ENCODE measurements at regions of chr12 and their contacts with region 1.

Region 1: GRCh38 chr12:89040146-89040964 is 311.9 kb downstream of the DUSP6 start:
- DNase-seq: peak; percentile 94
- H3K4me3 Mint-ChIP-seq: no peak overlapping the region
- H3K27ac Mint-ChIP-seq: peak overlapping the region; percentile 82
- H3K4me1 Mint-ChIP-seq: peaks cover 46% of the 10 kb centered on the region
- H3K27me3 Mint-ChIP-seq: no peaks in the 10 kb centered on the region

Region 2: GRCh38 chr12:88299567-88300101 is 740.7 kb before region 1 on chr12:
- CTCF ChIA-PET with region 1: no interaction called
- intact Hi-C with region 1: loop called (anchors 1 kb)
- DNase-seq: peak; percentile 50
- H3K4me3 Mint-ChIP-seq: no peak overlapping the region
- H3K27ac Mint-ChIP-seq: peak overlapping the region; percentile 9
- H3K4me1 Mint-ChIP-seq: peaks cover 17% of the 10 kb centered on the region
- H3K27me3 Mint-ChIP-seq: peaks cover 5% of the 10 kb centered on the region

Region 3: DNA sequence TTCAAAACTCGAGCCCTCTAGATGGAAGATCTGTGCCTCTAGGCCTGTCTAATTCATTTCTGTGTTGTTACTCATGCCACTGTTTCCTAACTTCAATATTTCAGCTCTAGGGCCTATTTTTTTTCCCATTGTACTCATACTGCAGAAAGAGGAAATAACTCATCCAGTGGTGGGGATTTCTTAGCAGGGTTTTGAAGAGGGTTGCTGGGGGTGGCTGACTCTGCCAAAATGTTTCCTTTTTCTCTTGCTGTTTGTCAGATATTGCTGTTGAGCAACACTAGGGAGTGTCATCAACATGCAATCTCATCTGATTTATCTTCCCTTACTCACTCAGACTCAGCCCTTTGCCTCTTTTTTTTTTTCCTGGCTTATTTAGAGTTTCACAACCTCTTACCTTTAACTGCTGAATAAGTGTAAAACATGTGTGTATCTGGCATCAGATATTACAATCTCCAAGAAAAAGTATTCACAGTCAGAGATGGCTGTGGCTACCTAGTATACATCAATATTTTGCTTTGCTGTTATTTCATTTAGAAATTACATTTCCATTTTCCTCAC is 122.4 kb after region 1 on chr12:
- CTCF ChIA-PET with region 1: no interaction called
- intact Hi-C with region 1: loop called (anchors 1 kb)
- DNase-seq: peak; percentile 81
- H3K4me3 Mint-ChIP-seq: no peak overlapping the region
- H3K27ac Mint-ChIP-seq: no peak overlapping the region
- H3K4me1 Mint-ChIP-seq: peaks cover 8% of the 10 kb centered on the region
- H3K27me3 Mint-ChIP-seq: no peaks in the 10 kb centered on the region

Region 4: DNA sequence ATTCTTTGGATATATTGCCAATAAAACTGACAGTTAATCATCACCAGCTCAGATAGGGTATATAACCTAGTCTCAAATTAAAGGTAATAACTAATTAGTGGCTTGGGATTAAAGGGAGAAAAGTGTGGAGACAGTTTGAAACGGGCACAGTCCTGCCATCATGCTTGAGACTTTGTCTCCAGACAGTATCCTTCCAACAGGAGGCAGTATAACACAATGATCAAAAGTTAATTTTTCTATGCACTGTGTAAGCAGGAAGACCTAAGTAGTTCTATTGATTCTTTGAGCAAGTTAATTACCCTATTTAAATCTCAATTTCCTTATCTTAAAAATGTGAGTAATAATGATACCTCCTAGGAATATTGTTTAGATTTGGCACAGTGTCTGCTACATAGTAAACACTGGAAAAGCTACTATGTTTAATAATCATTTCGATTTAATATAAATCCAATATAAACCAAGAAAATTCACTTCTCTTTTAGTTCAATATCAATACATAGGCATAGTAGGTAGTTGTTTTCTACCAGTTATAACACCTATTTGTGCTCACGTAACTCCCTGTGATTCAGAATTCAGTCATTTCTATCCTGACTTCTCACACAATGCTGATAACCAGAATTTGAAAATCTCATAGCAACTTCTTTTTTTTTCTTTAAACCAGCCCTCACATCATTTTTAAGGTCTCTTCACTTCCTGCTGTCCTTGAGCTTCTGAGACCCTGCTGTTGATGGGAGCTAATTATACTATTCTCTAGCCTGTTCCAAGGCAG is 430.6 kb after region 1 on chr12:
- CTCF ChIA-PET with region 1: interaction called, 4 read pairs
- intact Hi-C with region 1: loop called (anchors 2 kb)
- DNase-seq: no peak
- H3K4me3 Mint-ChIP-seq: no peak overlapping the region
- H3K27ac Mint-ChIP-seq: no peak overlapping the region
- H3K4me1 Mint-ChIP-seq: peaks cover 44% of the 10 kb centered on the region
- H3K27me3 Mint-ChIP-seq: no peaks in the 10 kb centered on the region

Region 5: GRCh38 chr12:89663577-89664357 is 623.4 kb after region 1 on chr12:
- CTCF ChIA-PET with region 1: no interaction called
- intact Hi-C with region 1: loop called (anchors 5 kb)
- DNase-seq: peak; percentile 38
- H3K4me3 Mint-ChIP-seq: peak overlapping the region; percentile 16
- H3K27ac Mint-ChIP-seq: peak overlapping the region; percentile 55
- H3K4me1 Mint-ChIP-seq: peaks cover 65% of the 10 kb centered on the region
- H3K27me3 Mint-ChIP-seq: no peaks in the 10 kb centered on the region

Region 6: DNA sequence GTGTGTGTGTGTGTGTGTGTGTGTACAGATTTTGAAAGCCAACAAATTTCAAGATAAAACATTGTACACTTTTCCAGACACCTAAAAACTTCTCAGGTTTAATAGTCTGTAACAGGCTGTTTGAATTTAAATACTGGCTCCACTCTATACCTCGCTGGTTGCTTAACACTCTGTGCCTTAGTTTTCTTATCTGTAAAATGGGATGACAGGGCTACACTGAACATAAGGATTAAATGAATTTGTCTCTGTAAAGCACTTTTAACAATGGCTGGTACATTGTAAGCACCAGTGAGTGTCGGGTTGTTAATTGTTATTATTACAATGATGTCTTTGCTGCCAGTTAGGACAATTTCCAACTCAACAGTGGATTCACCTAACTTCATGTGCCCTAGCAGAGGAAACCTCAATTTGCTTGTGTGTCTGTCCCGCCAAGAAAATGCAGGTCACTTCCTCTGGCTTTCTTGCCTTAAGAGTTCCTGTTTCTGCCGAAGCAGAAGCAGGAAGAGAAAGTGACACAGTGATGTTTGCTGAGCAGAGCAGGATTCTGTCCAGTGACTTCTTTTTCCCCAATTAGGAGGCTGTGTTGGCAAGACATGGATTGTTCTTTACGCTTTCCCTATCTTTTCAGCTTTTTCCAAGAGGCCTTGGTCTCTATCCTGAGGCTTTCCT is 822.3 kb after region 1 on chr12:
- CTCF ChIA-PET with region 1: no interaction called
- intact Hi-C with region 1: loop called (anchors 2 kb)
- DNase-seq: peak; percentile 57
- H3K4me3 Mint-ChIP-seq: peak overlapping the region; percentile 70
- H3K27ac Mint-ChIP-seq: peak overlapping the region; percentile 92
- H3K4me1 Mint-ChIP-seq: peaks cover 39% of the 10 kb centered on the region
- H3K27me3 Mint-ChIP-seq: no peaks in the 10 kb centered on the region

Region 7: GRCh38 chr12:90280564-90281058 is 1240.3 kb after region 1 on chr12:
- CTCF ChIA-PET with region 1: no interaction called
- intact Hi-C with region 1: loop called (anchors 1 kb)
- DNase-seq: peak; percentile 43
- H3K4me3 Mint-ChIP-seq: no peak overlapping the region
- H3K27ac Mint-ChIP-seq: peak overlapping the region; percentile 56
- H3K4me1 Mint-ChIP-seq: peaks cover 17% of the 10 kb centered on the region
- H3K27me3 Mint-ChIP-seq: peaks cover 9% of the 10 kb centered on the region

Measured in activated naive CD4-positive, alpha-beta T cell treated with anti-CD3 and anti-CD28 coated beads for 36 hours (primary cell).